Right ventricle myocardium inferior (tissue), 1 donor: ENCODE measurements at regions of chr1 and their contacts with region 1.

Region 1: GRCh38 chr1:197356723-197357533 is 88.9 kb downstream of the CRB1 start:
- DNase-seq: no peak
- ATAC-seq: peak; percentile 48

Region 2: DNA sequence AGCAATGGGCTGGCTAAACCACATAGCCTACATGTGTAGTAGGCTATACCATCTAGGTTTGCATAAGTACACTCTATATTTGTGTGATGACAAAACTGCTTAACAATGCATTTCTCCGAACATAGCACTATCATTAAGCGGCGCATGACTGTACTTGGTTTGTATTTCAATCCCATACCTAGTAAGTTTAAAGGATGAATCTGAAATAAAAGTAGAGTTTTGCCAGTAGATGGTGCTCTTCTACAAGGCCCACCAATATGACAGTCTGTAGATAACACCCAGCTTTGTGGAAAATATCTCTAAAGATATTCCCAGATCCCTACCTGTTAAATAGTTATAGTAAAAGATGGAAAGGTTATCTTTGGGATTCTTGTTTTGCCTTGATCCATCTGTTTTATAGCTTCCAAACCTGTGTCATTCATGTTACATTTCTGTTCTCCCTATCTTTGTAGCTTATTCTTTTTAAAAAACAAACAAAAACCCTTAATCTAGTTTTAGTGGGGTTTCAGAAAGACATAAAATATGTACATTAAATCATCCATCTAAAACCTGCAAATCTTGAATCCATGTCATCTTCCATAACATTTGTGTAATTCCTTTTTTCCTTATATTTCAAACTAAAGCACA is 176.6 kb before region 1 on chr1:
- intact Hi-C with region 1: loop called (anchors 5 kb)
- DNase-seq: no peak
- ATAC-seq: no peak

Region 3: GRCh38 chr1:197224160-197224559 is 132.8 kb before region 1 on chr1:
- intact Hi-C with region 1: loop called (anchors 5 kb)
- DNase-seq: no peak
- ATAC-seq: no peak

Region 4: GRCh38 chr1:197327776-197328364 is 29.1 kb before region 1 on chr1:
- intact Hi-C with region 1: loop called (anchors 2 kb)
- DNase-seq: no peak
- ATAC-seq: no peak